ENCODE measurements at regions of chr6 and their contacts with region 1.

Region 1: GRCh38 chr6:7723041-7723447 is 2.9 kb upstream of the BMP6 start:
- DNase-seq: peak; percentile 76
- ATAC-seq: peak; percentile 71
- H3K4me3 ChIP-seq: no peak overlapping the region
- H3K27ac ChIP-seq: no peak overlapping the region
- H3K4me1 ChIP-seq: peaks cover 10% of the 10 kb centered on the region
- H3K27me3 ChIP-seq: peaks cover 8% of the 10 kb centered on the region
- CTCF ChIP-seq: peak; percentile 70

Region 2: GRCh38 chr6:7312616-7313504 is 410.2 kb before region 1 on chr6 and contains the start of gene SSR1:
- intact Hi-C with region 1: no loop called
- DNase-seq: peak; percentile 99
- ATAC-seq: peak; percentile 100
- H3K4me3 ChIP-seq: peak within 1 kb of the TSS; percentile 100
- H3K27ac ChIP-seq: peak within 1 kb of the TSS; percentile 93
- H3K4me1 ChIP-seq: peaks cover 15% of the 10 kb centered on the region
- H3K27me3 ChIP-seq: no peaks in the 10 kb centered on the region
- CTCF ChIP-seq: no peak
- total RNA-seq, gene SSR1: 128 TPM

Region 3: GRCh38 chr6:7974938-7975763 is 252.1 kb after region 1 on chr6:
- intact Hi-C with region 1: no loop called
- DNase-seq: peak; percentile 69
- ATAC-seq: peak; percentile 86
- H3K4me3 ChIP-seq: no peak overlapping the region
- H3K27ac ChIP-seq: peak overlapping the region; percentile 40
- H3K4me1 ChIP-seq: peaks cover 10% of the 10 kb centered on the region
- H3K27me3 ChIP-seq: no peaks in the 10 kb centered on the region
- CTCF ChIP-seq: no peak

Region 4: GRCh38 chr6:8054276-8054675 is 331.2 kb after region 1 on chr6:
- intact Hi-C with region 1: loop called (anchors 5 kb)
- DNase-seq: no peak
- ATAC-seq: no peak
- H3K4me3 ChIP-seq: no peak overlapping the region
- H3K27ac ChIP-seq: no peak overlapping the region
- H3K4me1 ChIP-seq: no peaks in the 10 kb centered on the region
- H3K27me3 ChIP-seq: no peaks in the 10 kb centered on the region
- CTCF ChIP-seq: no peak